Left ventricle myocardium inferior (tissue), 1 donor: ENCODE measurements at regions of chr19 and their contacts with region 1.

Region 1: DNA sequence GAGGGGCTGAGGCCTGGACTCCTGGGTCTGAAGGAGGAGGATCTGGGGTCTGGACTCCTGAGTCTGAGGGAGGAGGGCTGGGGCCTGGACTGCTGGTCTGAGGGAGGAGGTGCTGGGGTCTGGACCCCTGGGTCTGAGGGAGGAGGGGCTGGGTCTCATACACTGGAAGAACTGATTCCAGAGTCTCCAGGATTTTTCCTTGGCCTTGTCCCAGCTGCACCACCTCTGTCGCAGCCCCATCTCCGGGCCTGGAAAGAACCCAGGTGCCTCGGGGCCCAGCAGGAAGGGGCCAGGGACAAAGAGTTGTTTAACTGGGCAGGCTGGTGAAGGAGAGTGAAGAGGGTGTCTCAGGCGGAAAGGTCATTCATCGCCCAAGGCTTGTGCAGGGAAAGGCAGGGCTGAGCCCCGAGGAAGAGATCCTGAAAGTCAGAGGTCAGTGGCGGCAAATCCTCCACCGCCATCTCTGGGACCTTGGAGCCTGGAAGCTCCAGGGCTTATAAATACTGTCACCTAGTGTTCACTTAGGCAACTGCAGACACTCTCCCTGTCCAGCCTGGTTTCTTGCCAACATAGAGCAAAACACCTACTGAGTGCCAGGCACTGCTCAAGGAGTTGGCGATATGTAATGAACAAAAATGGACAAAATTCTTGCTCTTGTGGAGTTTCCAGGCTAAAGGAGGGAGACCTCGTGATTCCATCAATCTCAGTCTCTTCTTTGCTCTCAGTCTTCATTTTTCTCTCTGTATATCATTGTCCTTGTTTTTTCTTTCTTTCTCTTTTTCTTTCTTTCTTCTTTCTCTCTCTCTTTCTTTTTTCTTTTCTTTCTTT is 4.4 kb upstream of the KCNN4 start:
- DNase-seq: no peak
- H3K4me3 ChIP-seq: no peak overlapping the region
- H3K27ac ChIP-seq: no peak overlapping the region
- H3K4me1 ChIP-seq: peaks cover 4% of the 10 kb centered on the region
- H3K27me3 ChIP-seq: peaks cover 46% of the 10 kb centered on the region
- CTCF ChIP-seq: peak; percentile 99

Region 2: GRCh38 chr19:43662487-43662886 is 122.7 kb before region 1 on chr19:
- intact Hi-C with region 1: no loop called
- DNase-seq: no peak
- H3K4me3 ChIP-seq: no peak overlapping the region
- H3K27ac ChIP-seq: no peak overlapping the region
- H3K4me1 ChIP-seq: peaks cover 13% of the 10 kb centered on the region
- H3K27me3 ChIP-seq: no peaks in the 10 kb centered on the region
- CTCF ChIP-seq: peak; percentile 41

Region 3: GRCh38 chr19:43731846-43732245 is 53.3 kb before region 1 on chr19:
- intact Hi-C with region 1: no loop called
- DNase-seq: no peak
- H3K4me3 ChIP-seq: no peak overlapping the region
- H3K27ac ChIP-seq: no peak overlapping the region
- H3K4me1 ChIP-seq: peaks cover 7% of the 10 kb centered on the region
- H3K27me3 ChIP-seq: no peaks in the 10 kb centered on the region
- CTCF ChIP-seq: no peak

Region 4: GRCh38 chr19:43747557-43748204 is 37.5 kb before region 1 on chr19:
- intact Hi-C with region 1: loop called (anchors 5 kb)
- DNase-seq: no peak
- H3K4me3 ChIP-seq: no peak overlapping the region
- H3K27ac ChIP-seq: no peak overlapping the region
- H3K4me1 ChIP-seq: peaks cover 18% of the 10 kb centered on the region
- H3K27me3 ChIP-seq: no peaks in the 10 kb centered on the region
- CTCF ChIP-seq: no peak